ENCODE measurements at regions of chr11 and their contacts with region 1.

Region 1: DNA sequence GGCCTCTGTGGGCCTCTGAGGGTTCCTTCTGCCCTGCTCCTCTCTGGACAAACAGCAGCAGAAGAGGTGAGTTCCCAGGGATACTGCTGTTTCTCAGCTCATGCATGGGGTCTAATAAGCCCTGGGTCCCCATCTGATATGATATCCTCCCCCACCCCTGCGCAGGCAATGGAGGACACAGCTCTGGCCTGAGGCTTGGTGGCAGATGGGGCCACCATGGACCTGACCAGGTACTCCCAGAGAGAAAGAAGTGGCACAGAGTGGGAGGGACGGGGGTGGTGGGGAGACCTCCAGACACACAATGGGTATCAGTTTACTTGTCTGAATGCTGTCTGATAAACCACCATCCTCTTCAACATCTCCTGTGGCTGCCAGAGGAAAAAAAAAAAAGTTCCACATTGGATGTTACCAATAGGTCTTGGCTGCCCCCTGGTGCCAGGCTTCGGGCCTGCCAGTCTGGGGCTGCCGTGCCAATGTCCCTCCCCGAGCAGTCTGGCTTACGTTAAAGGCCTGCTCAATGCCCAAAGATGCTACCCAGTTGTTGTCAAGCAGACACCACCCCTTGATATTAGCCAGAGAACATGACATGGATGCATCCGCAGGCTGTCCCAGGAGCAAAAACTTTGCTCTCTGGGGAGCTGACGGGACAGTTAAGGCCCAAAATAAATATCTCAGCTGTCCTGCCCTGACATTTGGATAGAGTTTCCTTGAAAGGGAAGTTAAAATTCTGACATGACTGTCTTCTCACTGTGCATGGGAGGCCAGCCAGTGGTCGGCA is 27.9 kb upstream of the ABCC8 start:
- DNase-seq: peak; percentile 87
- H3K4me3 ChIP-seq: no peak overlapping the region
- H3K27ac ChIP-seq: no peak overlapping the region
- H3K4me1 ChIP-seq: no peaks in the 10 kb centered on the region
- H3K27me3 ChIP-seq: no peaks in the 10 kb centered on the region; the same call in 1 of the 2 replicates

Region 2: GRCh38 chr11:17384002-17384511 is 120.5 kb before region 1 on chr11:
- in situ Hi-C with region 1: loop called (anchors 10 kb)
- DNase-seq: peak; percentile 85
- H3K4me3 ChIP-seq: no peak overlapping the region
- H3K27ac ChIP-seq: no peak overlapping the region
- H3K4me1 ChIP-seq: peaks cover 15% of the 10 kb centered on the region
- H3K27me3 ChIP-seq: no peaks in the 10 kb centered on the region

Measured in GM23248 (cell line).